A549 (cell line): ENCODE measurements at regions of chr1 and their contacts with region 1.

Region 1: DNA sequence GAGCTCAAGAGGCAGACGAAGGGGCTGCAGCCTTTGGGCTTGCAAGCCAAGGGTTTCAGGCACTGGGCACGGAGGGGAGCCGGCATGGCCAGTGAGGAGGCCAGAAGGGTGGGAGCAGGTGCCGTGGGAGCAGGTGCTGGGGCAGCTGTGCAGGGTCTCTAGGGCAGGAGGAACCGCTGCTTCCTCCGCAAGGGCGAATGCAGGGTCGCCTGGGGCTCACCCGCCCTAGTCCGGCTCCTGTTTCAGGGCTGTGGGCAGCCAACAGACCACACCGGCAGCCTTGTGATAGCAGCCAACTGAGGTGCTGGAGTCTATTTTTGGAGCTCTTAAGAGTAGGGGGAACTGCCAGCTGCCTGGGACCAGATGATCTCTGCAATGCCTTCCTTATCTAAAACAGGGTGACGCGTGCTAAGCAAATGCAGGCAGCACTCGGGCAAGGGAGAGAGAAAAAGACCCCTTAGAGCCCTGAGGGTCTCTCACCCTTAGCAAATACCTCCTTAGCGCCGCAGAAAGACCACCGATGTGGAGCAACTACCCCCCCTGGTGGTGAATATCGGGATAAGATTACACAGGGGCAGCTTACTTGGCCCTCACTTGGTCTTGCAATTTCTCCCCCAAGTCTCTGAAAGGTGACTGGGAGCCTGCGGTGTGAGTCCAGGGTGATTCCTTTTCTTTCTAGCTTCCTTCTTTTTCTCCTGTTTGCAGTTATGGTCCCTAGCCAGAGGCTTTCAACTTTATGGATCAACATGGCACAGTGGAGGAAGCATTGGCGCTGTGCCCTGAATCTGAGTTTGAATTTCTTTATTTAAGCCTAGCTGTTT is 20.7 kb upstream of the MAPKAPK2 start:
- DNase-seq: peak; percentile 64 to 65
- ATAC-seq: peak; percentile 84 to 91
- H3K4me3 ChIP-seq: no peak overlapping the region
- H3K27ac ChIP-seq: peak overlapping the region in 1 of 2 experiments; percentile 37; a peak in 2 of 6 replicates
- H3K4me1 ChIP-seq: peaks cover 7% of the 10 kb centered on the region; the same call in 1 of the 3 replicates
- CTCF ChIP-seq: peak; percentile 86
- EP300 ChIP-seq: no peak
- POLR2A ChIP-seq: no peak
- RAD21 ChIP-seq: peak; percentile 82 to 87

Region 2: DNA sequence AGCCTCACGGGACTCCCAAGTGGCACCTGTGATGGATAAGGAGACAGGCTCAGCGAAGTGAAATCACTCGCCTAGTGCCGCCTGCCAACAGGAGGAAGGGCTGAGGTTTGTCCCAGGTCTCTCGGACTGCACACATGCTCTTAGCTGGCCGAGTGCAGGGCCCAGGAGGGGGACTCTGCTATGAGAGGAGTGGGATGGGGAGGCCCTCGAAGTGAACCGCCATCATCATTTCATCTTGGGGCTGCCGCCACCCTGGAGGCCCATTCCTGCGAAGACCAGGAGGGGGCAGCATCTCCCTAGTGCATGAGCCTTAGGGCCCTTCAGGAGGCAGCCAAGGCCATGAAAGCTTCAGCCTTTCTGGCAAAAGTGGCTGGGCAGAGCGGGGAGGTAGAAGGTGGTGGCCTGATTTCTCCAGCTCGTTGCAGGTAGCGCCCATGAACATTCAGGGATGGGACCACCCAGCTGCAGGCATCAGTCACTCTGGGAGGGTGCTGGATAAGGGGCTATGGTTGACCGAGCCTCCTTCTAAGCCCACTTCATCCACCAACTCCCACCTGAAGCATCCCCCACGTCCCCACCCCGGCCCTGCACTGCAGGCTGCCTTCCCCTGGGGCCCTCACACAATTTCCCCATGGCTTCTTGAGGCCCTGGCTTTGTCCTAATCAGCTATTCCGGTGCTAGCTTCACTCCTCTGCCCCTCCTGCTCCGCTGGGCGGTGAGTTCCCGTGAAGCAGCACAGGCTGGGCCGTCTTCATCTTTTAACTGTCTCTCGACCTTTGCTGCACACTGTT is 173.9 kb before region 1 on chr1:
- CTCF ChIA-PET with region 1: interaction called, 38 read pairs
- POLR2A ChIA-PET with region 1: no interaction called
- DNase-seq: peak; percentile 71 to 93
- ATAC-seq: peak; percentile 90 to 97
- H3K4me3 ChIP-seq: no peak overlapping the region
- H3K27ac ChIP-seq: no peak overlapping the region
- H3K4me1 ChIP-seq: no peaks in the 10 kb centered on the region
- CTCF ChIP-seq: peak; percentile 89
- EP300 ChIP-seq: no peak
- POLR2A ChIP-seq: no peak
- RAD21 ChIP-seq: peak; percentile 84 to 93

Region 3: GRCh38 chr1:206612129-206612876 is 51.7 kb before region 1 on chr1 and contains the start of gene EIF2D:
- CTCF ChIA-PET with region 1: interaction called, 61 read pairs
- POLR2A ChIA-PET with region 1: interaction called, 4 read pairs
- DNase-seq: peak; percentile 95 to 99
- ATAC-seq: peak; percentile 95 to 98
- H3K4me3 ChIP-seq: peak within 1 kb of the TSS; percentile 62
- H3K27ac ChIP-seq: peak within 1 kb of the TSS; percentile 78 to 88
- H3K4me1 ChIP-seq: peaks cover 6% of the 10 kb centered on the region
- CTCF ChIP-seq: peak; percentile 78
- EP300 ChIP-seq: peak in 1 of 2 experiments; percentile 21; a peak in 1 of 5 replicates
- POLR2A ChIP-seq: peak; percentile 87
- RAD21 ChIP-seq: peak in 1 of 2 experiments; percentile 42; a peak in 3 of 5 replicates
- polyA plus RNA-seq, gene EIF2D: 63.2 and 72.6 TPM in 2 replicates

Region 4: DNA sequence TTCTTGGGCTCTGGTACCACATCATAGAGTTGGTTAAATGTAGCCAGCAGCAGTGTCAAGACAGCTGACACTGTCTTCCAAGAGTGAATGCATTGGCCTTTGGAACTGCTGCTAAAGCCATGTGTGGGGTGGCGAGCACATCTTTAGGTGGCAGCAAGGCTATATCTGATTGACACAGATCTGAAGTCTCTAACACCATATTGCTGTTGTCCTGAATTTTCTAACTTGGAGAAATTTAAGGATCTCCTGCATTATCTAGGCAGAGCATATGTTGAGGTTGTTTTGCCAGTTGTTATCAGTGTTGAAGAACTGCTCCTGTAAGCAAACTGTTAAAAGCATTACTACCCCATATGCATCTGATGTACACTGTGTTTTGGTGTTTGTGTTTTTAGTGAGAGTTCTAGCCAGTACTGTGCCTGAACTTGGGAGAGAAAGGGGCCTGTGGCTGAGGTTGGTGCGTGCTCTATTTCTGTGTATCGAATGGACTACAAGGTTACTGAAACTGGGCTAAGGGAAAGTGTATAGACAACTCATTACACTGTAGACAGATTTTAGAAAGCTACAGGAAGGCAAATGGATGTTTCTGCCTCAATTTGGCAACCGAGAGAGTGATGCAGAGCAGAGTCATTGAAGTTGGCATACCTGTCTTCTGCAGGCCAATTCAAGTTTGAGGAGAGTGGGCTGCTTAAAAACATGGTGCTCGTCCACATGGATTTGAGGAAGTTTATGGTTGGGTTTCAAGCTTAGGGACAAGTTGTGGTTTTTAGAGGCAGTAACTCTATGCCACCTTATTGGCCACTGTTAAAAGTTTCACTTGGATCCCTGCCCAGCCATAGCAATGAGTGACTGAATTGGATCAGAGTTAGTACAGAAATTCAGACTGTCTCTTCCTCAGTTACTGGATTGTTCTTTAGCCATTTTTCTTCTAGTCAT is 11.8 kb before region 1 on chr1:
- CTCF ChIA-PET with region 1: interaction called, 69 read pairs
- POLR2A ChIA-PET with region 1: no interaction called
- DNase-seq: no peak
- ATAC-seq: no peak
- H3K4me3 ChIP-seq: no peak overlapping the region
- H3K27ac ChIP-seq: no peak overlapping the region
- H3K4me1 ChIP-seq: no peaks in the 10 kb centered on the region
- CTCF ChIP-seq: no peak
- EP300 ChIP-seq: no peak
- POLR2A ChIP-seq: no peak
- RAD21 ChIP-seq: no peak

Region 5: DNA sequence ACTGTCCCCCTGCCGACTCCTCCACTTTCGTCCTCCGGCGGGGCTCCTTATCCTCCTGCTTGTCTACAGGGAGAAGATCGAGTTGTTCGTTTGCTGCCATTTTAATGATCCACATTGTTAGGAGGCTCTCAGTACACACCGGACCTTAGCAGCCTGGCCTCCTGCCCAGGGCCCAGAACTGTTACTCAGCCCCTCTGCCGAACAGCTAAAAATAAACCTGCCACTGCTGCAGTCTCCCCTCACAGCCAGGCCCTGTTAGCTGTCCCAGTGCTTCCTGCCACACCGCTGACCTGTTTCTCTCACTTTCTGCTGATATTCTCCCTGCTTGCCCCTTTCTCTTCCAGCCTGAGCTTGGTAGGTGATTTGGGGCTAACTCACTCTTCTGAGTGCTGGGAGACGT is 29.0 kb after region 1 on chr1:
- CTCF ChIA-PET with region 1: interaction called, 40 read pairs
- POLR2A ChIA-PET with region 1: no interaction called
- DNase-seq: no peak
- ATAC-seq: peak in 1 of 2 experiments; percentile 28; a peak in 2 of 6 replicates
- H3K4me3 ChIP-seq: no peak overlapping the region
- H3K27ac ChIP-seq: peak overlapping the region in 1 of 2 experiments; percentile 42; a peak in 4 of 6 replicates
- H3K4me1 ChIP-seq: peaks cover 75% of the 10 kb centered on the region
- CTCF ChIP-seq: no peak
- EP300 ChIP-seq: no peak
- POLR2A ChIP-seq: no peak
- RAD21 ChIP-seq: no peak

Region 6: DNA sequence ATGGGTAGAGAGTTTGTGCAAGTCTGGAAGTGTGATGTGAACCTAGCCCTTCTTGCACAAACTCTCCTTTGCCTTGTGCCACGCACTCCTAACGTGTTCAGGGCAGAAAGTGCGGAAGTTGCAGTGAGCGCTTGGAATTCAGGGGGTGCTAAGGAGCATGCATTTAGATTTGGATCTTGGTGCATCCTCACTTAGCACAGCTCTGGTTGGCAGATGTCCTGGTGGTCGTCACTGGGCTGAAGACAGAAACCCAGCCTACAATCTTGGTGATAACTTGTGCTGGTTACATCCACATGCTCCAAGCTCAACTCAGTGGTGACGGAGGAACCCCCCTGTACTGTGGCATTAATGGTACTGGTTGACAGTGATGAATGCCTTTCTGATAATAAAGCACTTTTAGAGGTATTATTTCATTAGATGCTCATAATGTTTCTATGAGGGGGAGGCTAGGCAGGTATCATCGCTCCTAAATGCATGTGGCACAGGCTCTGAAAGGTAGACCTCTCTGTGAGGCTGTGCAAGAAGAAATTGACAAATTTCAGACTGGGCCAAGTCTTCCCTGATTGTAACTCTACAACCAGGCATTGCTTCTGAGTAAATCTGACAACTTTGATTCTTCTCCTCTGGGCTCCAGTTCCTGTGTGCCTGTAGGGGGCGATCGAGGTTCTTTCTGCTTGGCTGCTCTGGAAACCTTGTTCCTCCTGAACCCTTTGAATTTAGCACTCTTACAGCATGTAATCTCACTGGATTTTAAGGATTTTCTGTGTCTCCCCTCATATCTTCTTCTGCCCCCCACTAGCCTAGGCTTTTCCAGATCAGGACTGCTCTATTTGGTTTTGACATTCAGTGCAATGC is 61.3 kb after region 1 on chr1:
- CTCF ChIA-PET with region 1: interaction called, 23 read pairs
- POLR2A ChIA-PET with region 1: no interaction called
- DNase-seq: peak; percentile 57
- ATAC-seq: peak in 1 of 2 experiments; percentile 44; a peak in 3 of 6 replicates
- H3K4me3 ChIP-seq: no peak overlapping the region
- H3K27ac ChIP-seq: peak overlapping the region; percentile 90 to 92
- H3K4me1 ChIP-seq: peaks cover 62% of the 10 kb centered on the region
- CTCF ChIP-seq: peak; percentile 46; the same call in 2 of the 3 replicates
- EP300 ChIP-seq: no peak
- POLR2A ChIP-seq: no peak
- RAD21 ChIP-seq: peak in 1 of 2 experiments; percentile 36; a peak in 2 of 5 replicates

Region 7: DNA sequence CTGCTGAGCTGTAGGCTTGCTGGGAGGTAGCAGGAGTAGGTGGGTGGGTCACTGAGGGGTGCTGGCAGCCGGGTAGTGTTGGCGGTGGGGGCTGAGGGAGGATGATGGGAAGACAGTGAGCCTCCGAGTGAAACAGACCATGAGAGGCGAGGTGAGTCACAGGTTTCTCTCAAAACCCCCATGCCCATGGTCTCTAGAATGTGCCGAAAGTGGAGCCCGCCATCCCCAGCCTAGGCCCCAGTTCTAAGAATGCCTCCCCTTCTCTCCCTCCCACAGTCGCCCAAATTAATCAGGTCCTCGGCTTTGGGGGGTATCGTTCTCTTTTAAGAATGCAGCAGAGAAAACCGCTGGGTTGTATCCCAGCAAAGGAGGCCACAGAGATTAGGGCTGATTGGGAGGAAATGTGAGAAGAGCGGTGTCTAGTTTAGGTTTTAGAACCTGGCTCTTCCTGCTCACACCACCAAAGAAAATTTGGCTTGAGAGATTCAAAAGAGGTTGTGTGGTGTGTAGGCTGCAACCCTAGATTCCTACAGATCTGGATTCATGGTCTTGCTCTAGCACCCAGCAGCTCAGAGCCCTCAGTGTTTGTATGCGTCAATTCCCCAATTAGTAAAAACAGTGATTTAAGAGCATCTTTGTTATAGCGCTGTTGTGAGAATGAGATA is 78.8 kb after region 1 on chr1:
- CTCF ChIA-PET with region 1: no interaction called
- POLR2A ChIA-PET with region 1: no interaction called
- DNase-seq: no peak
- ATAC-seq: no peak
- H3K4me3 ChIP-seq: no peak overlapping the region
- H3K27ac ChIP-seq: no peak overlapping the region
- H3K4me1 ChIP-seq: peaks cover 6% of the 10 kb centered on the region; the same call in 1 of the 3 replicates
- CTCF ChIP-seq: no peak
- EP300 ChIP-seq: no peak
- POLR2A ChIP-seq: no peak
- RAD21 ChIP-seq: no peak

Region 8: DNA sequence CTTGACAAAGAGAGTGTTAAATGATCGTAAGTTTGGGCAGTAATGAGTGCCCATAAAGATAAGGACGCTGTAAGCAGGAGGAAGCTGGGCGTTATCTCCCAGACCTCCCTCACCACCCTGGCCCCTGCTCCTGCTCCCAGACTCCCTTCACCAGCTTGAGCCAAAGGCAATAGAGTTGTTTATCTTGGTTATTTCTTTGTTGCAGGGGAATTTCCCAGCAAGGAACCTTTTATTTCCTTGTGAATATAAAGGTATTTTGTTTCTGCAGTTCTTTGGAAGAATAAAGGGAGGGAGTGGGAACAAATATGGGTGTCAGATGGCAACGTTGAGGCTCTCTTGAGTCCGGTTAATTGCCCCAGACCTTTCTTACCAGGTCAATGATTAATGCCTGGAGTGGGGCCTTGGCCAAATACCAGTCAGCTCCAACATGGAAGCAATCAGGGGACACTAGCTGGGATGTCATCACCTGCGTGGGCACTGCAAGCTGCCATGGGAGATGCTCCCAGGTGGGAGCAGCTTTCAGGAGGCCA is 277.9 kb after region 1 on chr1:
- CTCF ChIA-PET with region 1: no interaction called
- POLR2A ChIA-PET with region 1: no interaction called
- DNase-seq: no peak
- ATAC-seq: no peak
- H3K4me3 ChIP-seq: no peak overlapping the region
- H3K27ac ChIP-seq: no peak overlapping the region
- H3K4me1 ChIP-seq: peaks cover 5% of the 10 kb centered on the region; the same call in 1 of the 3 replicates
- CTCF ChIP-seq: no peak
- EP300 ChIP-seq: no peak
- POLR2A ChIP-seq: no peak
- RAD21 ChIP-seq: no peak